Activated naive CD4-positive, alpha-beta T cell treated with anti-CD3 and anti-CD28 coated beads, Interleukin-2, amount 10 ng/mL, durations not matched to agents 7 days and 5 days (primary cell): ENCODE measurements at regions of chr11 and their contacts with region 1.

Region 1: GRCh38 chr11:61332797-61333549 is at the starts of genes DDB1 and TKFC:
- DNase-seq: peak; percentile 98
- H3K4me3 Mint-ChIP-seq: peak within 1 kb of the TSS; percentile 93
- H3K27ac Mint-ChIP-seq: peak within 1 kb of the TSS; percentile 97
- H3K4me1 Mint-ChIP-seq: peaks cover 72% of the 10 kb centered on the region
- H3K27me3 Mint-ChIP-seq: no peaks in the 10 kb centered on the region

Region 2: DNA sequence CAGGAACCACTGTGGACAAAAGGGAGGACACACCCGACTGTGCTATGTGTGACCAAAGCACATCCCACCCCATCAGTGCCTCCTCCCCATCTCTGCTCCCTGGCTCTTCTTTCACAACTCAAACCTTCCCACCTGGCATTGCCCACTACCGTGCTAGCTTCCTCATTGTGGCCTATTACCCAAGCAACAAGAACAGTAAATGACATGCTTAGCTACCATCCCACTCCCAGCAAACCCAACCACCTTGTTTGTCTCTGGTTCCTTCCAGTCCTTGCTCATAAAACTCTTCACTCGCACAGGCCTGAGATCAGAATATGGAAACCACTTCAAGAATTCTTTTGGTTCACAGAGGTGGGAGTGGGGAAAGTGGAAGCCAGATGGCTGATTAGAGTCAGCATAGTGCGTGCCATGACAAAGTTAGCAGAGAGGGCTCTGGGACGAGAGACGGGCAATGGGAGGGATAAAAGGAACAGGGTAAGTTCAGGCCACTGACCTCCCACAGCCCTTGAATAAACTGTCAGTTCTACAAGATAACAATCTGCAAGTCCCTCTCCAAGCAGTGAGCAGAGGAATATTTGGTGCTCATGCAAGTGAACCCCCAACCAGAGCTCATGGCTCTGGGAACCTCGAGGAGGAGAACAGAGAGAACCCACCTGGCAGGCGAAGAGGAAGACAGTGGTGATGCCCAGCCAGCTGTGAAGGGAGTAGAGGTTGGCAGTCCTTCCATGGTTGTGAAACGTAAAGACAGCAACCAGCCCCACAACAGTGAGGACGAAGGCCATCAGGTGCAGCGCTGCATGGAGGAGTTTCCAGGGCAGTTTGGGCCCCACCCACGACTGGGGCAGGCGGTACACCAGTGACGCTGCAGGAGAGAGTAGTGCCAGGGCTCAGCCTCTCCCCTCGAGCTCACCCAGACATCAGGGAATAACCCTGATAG is 20.4 kb after region 1 on chr11:
- CTCF ChIA-PET with region 1: interaction called, 48 read pairs
- DNase-seq: no peak
- H3K4me3 Mint-ChIP-seq: no peak overlapping the region
- H3K27ac Mint-ChIP-seq: no peak overlapping the region
- H3K4me1 Mint-ChIP-seq: peaks cover 11% of the 10 kb centered on the region
- H3K27me3 Mint-ChIP-seq: no peaks in the 10 kb centered on the region

Region 3: DNA sequence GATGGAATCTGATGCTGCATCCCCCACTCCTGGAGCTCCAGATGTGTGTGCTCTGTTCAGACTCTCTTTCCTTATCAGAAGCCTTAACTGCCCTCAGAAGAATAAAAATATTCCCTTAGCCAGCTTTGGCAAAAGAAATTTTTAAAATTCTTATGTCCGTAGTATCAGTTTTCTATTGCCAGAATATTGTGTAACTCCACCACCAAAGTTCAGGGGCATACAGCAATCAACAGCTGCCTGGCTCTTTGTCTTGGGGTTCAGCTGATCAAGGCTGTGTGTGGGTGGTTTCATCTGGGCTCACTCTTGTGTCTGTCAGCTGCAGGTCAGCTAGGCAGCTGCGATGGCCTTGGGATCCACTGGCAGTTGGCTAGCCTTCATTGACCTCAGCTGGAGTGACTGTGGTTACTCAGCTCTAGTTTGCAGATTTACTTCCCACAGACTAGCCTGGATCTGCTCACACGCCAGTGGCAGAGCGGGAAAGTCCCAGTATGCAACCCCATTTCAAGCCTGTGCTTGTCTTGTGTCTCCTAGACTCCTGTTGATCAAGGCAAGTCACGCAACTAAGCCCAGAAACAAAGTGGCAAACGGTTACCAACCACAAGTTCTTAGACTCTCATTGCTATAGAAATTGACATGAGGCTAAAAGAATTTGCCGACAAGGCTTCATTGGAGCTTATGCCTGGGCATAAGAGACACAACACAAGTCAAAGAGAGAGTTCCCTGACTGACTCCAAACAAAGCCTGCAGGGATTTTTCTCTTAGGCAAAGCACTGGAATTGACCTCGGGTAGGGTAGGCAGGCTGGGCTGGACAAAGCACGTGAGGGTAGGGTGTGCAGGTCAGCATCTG is 36.6 kb after region 1 on chr11:
- CTCF ChIA-PET with region 1: interaction called, 18 read pairs
- DNase-seq: no peak
- H3K4me3 Mint-ChIP-seq: no peak overlapping the region
- H3K27ac Mint-ChIP-seq: no peak overlapping the region
- H3K4me1 Mint-ChIP-seq: peaks cover 7% of the 10 kb centered on the region
- H3K27me3 Mint-ChIP-seq: no peaks in the 10 kb centered on the region

Region 4: DNA sequence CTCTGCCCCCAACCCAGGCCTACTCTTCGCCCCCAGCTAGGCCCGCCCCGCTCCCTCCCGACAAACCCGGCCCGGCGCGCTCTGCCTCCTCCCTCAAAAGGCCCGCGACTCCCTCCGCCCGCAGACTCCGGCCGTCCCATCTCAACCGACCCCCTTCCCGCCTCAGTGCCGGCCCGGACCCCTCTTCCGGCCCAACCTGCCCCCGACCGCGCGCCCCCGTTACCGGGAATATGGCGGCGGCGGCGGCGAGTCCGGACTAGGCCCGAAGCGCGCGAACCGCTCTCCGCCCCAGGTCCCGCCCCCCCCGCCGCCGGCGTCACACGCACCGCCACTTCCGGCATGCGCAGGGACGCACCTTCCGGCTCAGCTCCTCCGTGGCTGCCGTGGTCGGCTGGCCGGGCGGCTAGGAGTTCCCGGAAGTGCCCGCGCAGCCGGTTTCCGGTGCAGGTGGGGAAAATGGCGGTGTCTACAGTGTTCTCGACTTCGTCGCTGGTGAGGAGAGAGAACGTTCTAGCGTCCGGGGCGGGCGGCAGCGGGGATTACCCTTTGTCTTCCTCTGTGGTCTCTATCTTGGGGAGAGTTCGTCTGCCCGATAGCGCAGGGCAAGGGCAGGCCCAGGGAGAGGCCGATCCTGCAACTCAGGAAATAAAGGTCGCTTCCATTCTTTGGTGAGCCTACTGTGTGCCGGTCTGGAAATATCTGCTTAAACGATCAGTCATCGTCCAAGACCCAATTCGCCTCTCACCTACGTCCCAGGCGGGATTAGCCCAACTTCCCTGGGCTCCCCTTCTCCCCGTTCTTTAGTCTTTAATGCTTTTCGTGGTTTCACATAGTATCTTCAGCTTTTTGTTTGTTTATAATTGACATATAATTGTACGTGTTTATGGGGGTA is 97.0 kb after region 1 on chr11 and contains the starts of genes CPSF7 and SDHAF2:
- CTCF ChIA-PET with region 1: interaction called, 26 read pairs
- DNase-seq: peak; percentile 98
- H3K4me3 Mint-ChIP-seq: peak within 1 kb of the TSS; percentile 89
- H3K27ac Mint-ChIP-seq: peak within 1 kb of the TSS; percentile 97
- H3K4me1 Mint-ChIP-seq: peaks cover 64% of the 10 kb centered on the region
- H3K27me3 Mint-ChIP-seq: no peaks in the 10 kb centered on the region

Region 5: GRCh38 chr11:62116458-62116857 is 783.5 kb after region 1 on chr11:
- CTCF ChIA-PET with region 1: no interaction called
- DNase-seq: no peak
- H3K4me3 Mint-ChIP-seq: no peak overlapping the region
- H3K27ac Mint-ChIP-seq: no peak overlapping the region
- H3K4me1 Mint-ChIP-seq: peaks cover 3% of the 10 kb centered on the region
- H3K27me3 Mint-ChIP-seq: peaks cover 26% of the 10 kb centered on the region